Dorsolateral prefrontal cortex (tissue), 120 donors: ENCODE measurements at regions of chr10 and their contacts with region 1.

Region 1: DNA sequence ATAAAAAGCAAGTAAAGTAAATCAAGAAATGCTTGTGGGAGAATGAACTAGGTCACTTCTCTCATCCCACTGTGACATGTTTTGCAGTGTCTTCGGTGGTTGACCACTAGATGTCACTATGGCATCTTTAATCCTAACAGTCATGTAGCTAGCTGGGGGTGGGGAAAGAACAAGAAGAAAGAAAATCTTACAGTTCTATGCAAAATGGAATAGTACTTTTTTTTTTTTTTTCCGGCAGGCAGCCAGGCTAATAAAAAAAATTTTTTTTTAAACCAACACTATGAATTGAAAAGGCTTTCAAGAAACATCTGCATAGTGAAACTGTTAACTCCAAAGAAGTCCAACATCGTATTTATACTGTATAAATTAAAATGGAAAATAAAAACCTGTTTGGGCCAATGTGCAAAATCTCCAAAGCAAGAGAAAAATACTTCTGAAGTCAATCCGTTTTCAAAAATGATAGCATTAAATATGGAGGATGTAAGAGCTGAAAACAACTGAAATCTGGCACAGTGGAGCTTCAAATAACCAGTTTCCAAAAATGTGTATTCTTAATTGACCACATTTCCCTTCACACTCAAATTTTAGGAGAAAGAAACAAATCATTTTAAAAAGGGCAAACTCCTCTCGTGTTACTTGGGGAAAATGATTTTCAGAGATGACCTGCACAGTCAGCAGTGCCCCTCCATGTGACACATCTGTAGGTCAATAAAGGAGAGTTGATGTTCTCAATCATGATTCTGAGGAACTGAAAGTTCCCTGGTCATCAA is 38.5 kb downstream of the CDK1 start:
- DNase-seq: peak in 4 of 10 donors; percentile 26 to 66 (median 48)
- H3K4me3 ChIP-seq: peak overlapping the region in 51 of 59 donors; percentile 2 to 63 (median 32)
- H3K27ac ChIP-seq: peak overlapping the region in 52 of 59 donors; percentile 0 to 81 (median 56)
- H3K27me3 ChIP-seq: no peaks in the 10 kb centered on the region
- CTCF ChIP-seq: peak; percentile 79 to 97 (median 92)

Region 2: GRCh38 chr10:60388709-60389301 is 428.0 kb before region 1 on chr10:
- intact Hi-C with region 1: no loop called
- DNase-seq: peak in 3 of 10 donors; percentile 25 to 66 (median 49)
- H3K4me3 ChIP-seq: peak overlapping the region; percentile 38 to 83 (median 64)
- H3K27ac ChIP-seq: peak overlapping the region; percentile 13 to 97 (median 91)
- H3K27me3 ChIP-seq: no peaks in the 10 kb centered on the region
- CTCF ChIP-seq: no peak

Region 3: GRCh38 chr10:60521974-60522405 is 294.8 kb before region 1 on chr10:
- intact Hi-C with region 1: no loop called
- DNase-seq: no peak
- H3K4me3 ChIP-seq: peak overlapping the region in 1 of 59 donors; percentile 26
- H3K27ac ChIP-seq: peak overlapping the region; percentile 8 to 89 (median 78)
- H3K27me3 ChIP-seq: no peaks in the 10 kb centered on the region
- CTCF ChIP-seq: no peak

Region 4: GRCh38 chr10:60914690-60915141 is 97.9 kb after region 1 on chr10:
- intact Hi-C with region 1: no loop called
- DNase-seq: no peak
- H3K4me3 ChIP-seq: no peak overlapping the region
- H3K27ac ChIP-seq: peak overlapping the region in 20 of 59 donors; percentile 6 to 88 (median 24)
- H3K27me3 ChIP-seq: no peaks in the 10 kb centered on the region
- CTCF ChIP-seq: no peak

Region 5: GRCh38 chr10:60944159-60944909 is 127.5 kb after region 1 on chr10 and contains the start of gene RHOBTB1:
- intact Hi-C with region 1: loop called in 1 of 2 experiments (anchors 5 kb)
- DNase-seq: peak; percentile 14 to 86 (median 75)
- H3K4me3 ChIP-seq: peak within 1 kb of the TSS; percentile 63 to 95 (median 85)
- H3K27ac ChIP-seq: peak within 1 kb of the TSS; percentile 93 to 100 (median 99)
- H3K27me3 ChIP-seq: no peaks in the 10 kb centered on the region
- CTCF ChIP-seq: peak in 7 of 56 donors; percentile 3 to 27 (median 6)
- total RNA-seq, gene RHOBTB1: 6.6 to 36.7 (median 15.0) TPM

Region 6: DNA sequence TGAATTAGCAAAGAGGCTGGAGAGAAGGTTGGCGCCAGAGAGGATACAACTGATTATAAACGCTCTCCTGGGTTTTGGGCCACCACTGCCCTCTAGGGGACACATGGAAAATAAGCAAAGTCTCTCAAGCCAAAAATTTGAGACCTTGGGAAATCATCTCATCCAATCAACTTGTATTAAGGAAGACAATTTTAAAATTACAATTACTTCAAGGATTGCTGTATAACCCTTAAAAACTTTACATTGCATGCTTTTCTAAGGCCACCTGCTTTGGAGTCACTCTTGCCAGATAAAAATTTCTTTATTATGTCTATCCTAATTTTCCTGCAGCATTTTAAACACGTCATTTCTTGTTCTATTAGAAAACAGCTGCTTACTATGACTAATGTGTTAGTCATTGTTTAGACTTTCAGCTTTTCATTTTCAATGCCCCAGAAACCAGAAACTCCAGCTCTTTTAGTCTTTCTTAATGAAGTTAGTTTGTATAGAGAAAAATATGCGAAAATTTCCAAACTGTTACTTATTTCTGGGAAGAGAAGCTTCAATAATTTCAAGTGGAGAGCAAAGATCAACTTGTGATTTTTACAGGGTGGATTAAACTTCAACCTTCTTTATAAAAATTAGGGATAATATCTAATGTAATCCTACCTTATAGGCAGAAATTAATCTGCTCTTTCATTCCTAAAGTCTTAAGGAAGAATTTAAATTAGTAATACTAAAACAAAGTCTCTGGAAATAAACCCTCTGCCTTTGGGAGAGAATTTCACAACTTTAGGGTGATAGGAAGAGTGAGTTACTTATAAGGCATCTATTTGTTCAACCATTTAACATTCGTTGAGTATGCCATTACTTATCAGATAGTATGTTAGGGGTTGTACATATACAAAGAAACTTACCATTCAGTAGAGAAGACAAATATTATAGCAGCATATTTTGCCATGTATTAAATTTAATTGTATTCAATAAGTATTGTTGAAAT is 147.7 kb after region 1 on chr10:
- intact Hi-C with region 1: loop called (anchors 5 kb)
- DNase-seq: peak; percentile 40 to 81 (median 68)
- H3K4me3 ChIP-seq: peak overlapping the region in 28 of 59 donors; percentile 1 to 51 (median 18)
- H3K27ac ChIP-seq: peak overlapping the region in 58 of 59 donors; percentile 18 to 91 (median 79)
- H3K27me3 ChIP-seq: no peaks in the 10 kb centered on the region
- CTCF ChIP-seq: peak; percentile 67 to 98 (median 90)

Region 7: GRCh38 chr10:61140765-61141392 is 324.1 kb after region 1 on chr10:
- intact Hi-C with region 1: loop called in 1 of 2 experiments (anchors 10 kb)
- DNase-seq: peak in 3 of 10 donors; percentile 4 to 48 (median 44)
- H3K4me3 ChIP-seq: peak overlapping the region in 36 of 59 donors; percentile 1 to 53 (median 28)
- H3K27ac ChIP-seq: peak overlapping the region in 9 of 59 donors; percentile 2 to 54 (median 14)
- H3K27me3 ChIP-seq: no peaks in the 10 kb centered on the region
- CTCF ChIP-seq: peak; percentile 51 to 90 (median 79)

Region 8: GRCh38 chr10:61733358-61733940 is 916.6 kb after region 1 on chr10:
- intact Hi-C with region 1: loop called in 1 of 2 experiments (anchors 10 kb)
- DNase-seq: peak in 1 of 10 donors; percentile 17
- H3K4me3 ChIP-seq: no peak overlapping the region
- H3K27ac ChIP-seq: no peak overlapping the region
- H3K27me3 ChIP-seq: no peaks in the 10 kb centered on the region
- CTCF ChIP-seq: peak; percentile 50 to 84 (median 70)